ENCODE measurements at regions of chr14 and their contacts with region 1.

Region 1: GRCh38 chr14:63650256-63650952 is 8.7 kb upstream of the WDR89 start:
- DNase-seq: peak in 7 of 9 donors; percentile 76 to 92 (median 87)
- ATAC-seq: peak; percentile 98
- H3K4me3 ChIP-seq: peak overlapping the region; percentile 3
- H3K4me3 Mint-ChIP-seq: peak overlapping the region; percentile 38 to 95 (median 75)
- H3K27ac ChIP-seq: peak overlapping the region; percentile 89
- H3K27ac Mint-ChIP-seq: peak overlapping the region; percentile 90 to 100 (median 100)
- H3K4me1 ChIP-seq: peaks cover 25 to 45% of the 10 kb centered on the region in 2 donors
- H3K4me1 Mint-ChIP-seq: peaks cover 21 to 69% (median 53%) of the 10 kb centered on the region in 7 donors
- H3K27me3 ChIP-seq: no peaks in the 10 kb centered on the region
- H3K27me3 Mint-ChIP-seq: no peaks in the 10 kb centered on the region

Region 2: DNA sequence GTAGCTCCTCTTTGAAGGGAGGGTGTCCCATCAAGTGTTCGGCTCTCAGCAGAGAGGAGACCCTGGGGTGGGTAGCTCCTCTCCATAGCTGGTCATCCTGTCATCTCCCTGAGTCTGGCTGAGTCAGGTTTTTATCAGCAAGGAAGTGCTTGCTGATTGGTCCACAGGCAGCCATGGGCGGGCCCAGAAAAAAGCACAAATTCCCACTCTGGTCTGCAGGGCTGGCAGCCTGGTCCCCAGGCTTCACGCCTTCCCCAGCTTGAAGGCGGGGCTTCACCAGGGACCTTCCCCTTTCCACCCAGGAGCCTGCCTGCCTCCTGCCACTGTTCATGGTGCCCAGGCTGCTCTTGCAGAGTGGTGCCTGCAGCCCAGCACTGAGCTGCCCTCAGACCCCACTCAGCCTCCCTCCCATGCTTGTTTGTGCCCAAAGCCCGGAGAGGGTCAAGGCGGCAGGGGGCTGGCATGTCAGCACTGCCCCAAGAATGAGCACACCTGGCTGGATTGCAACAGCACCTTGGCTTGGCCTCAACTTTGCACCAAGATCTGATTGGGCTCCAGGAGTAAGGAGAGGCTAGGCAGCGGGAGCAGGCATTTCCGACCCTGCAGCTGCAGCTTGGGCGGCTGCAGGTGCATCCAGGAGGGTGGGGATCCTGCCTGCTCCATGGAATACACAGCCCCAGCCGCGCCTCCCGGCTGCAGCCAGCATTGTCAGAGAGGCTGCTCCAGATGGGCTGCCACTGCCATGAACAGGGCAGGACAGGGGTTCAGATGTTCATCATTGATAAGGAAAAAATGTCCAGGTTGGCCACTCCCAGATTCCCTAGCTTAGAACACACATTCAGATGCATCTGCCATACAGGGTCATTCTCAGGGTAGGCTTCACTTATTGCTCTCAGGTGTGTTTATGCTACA is 13.3 kb after region 1 on chr14:
- CTCF ChIA-PET with region 1: interaction called, 3 read pairs
- POLR2A ChIA-PET with region 1: interaction called, 12 read pairs
- intact Hi-C with region 1: no loop called
- DNase-seq: no peak
- ATAC-seq: no peak
- H3K4me3 ChIP-seq: no peak overlapping the region
- H3K4me3 Mint-ChIP-seq: no peak overlapping the region
- H3K27ac ChIP-seq: no peak overlapping the region
- H3K27ac Mint-ChIP-seq: no peak overlapping the region
- H3K4me1 ChIP-seq: no peaks in the 10 kb centered on the region
- H3K4me1 Mint-ChIP-seq: peaks cover 0 to 6% (median 0%) of the 10 kb centered on the region in 7 donors
- H3K27me3 ChIP-seq: no peaks in the 10 kb centered on the region
- H3K27me3 Mint-ChIP-seq: no peaks in the 10 kb centered on the region

Region 3: GRCh38 chr14:63670692-63671091 is 20.3 kb after region 1 on chr14:
- CTCF ChIA-PET with region 1: no interaction called
- POLR2A ChIA-PET with region 1: interaction called, 10 read pairs
- intact Hi-C with region 1: no loop called
- DNase-seq: no peak
- ATAC-seq: no peak
- H3K4me3 ChIP-seq: no peak overlapping the region
- H3K4me3 Mint-ChIP-seq: no peak overlapping the region
- H3K27ac ChIP-seq: no peak overlapping the region
- H3K27ac Mint-ChIP-seq: no peak overlapping the region
- H3K4me1 ChIP-seq: no peaks in the 10 kb centered on the region
- H3K4me1 Mint-ChIP-seq: peaks cover 0 to 2% (median 0%) of the 10 kb centered on the region in 7 donors
- H3K27me3 ChIP-seq: no peaks in the 10 kb centered on the region
- H3K27me3 Mint-ChIP-seq: no peaks in the 10 kb centered on the region